ENCODE measurements at regions of chr12 and their contacts with region 1.

Region 1: DNA sequence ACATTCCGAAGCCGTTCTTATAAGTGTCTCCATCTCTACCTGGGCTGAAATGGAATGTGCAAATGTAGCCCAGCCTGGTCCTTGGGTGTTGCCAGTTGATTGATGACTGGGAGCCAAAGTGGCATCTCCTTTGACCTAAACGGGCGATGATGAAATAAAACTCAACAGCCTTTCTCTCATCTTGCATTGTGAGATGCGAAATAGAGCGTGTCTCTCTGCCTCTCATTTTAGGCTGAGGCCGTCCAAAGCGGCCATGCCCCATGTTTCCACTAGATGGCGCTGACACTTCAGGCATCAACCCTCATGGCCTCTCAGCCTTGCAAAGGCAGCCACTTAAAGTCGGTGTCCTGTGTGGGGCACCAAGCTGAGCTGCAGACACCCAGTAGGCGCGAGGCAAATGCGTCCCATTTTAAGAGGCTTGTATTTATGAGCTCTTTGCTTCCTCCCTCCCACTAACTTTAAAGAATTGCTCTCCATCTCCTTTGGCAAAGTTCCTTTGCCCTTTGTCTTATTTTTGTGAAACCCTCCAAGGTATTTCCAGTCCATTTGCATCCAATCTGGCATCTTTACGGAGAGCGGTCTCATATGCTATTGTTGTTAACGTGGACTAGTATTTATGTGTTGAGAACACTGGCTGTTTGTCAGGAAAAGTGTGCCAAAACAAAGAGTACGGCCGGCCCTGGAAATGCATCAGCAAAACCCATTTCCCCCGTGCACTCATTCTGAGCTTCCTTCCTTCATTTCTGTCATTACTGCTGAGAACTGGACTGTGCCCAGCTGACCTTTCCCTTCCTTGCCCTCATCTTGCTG is 25.0 kb downstream of the GPRC5A start:
- DNase-seq: peak; percentile 76 to 82 (median 80)
- H3K4me3 ChIP-seq: no peak overlapping the region
- H3K4me3 Mint-ChIP-seq: peak overlapping the region in 1 of 8 donors; percentile 0
- H3K27ac ChIP-seq: no peak overlapping the region
- H3K27ac Mint-ChIP-seq: peak overlapping the region in 3 of 7 donors; percentile 9 to 36 (median 14)
- H3K4me1 ChIP-seq: peaks cover 5% of the 10 kb centered on the region
- H3K4me1 Mint-ChIP-seq: peaks cover 5 to 8% (median 7%) of the 10 kb centered on the region in 4 donors
- H3K27me3 ChIP-seq: no peaks in the 10 kb centered on the region
- H3K27me3 Mint-ChIP-seq: peaks cover 4 to 9% of the 10 kb centered on the region in 2 donors

Region 2: GRCh38 chr12:12983420-12984035 is 67.2 kb after region 1 on chr12:
- CTCF ChIA-PET with region 1: interaction called, 8 read pairs
- POLR2A ChIA-PET with region 1: no interaction called
- intact Hi-C with region 1: loop called (anchors 1 kb)
- DNase-seq: no peak
- H3K4me3 ChIP-seq: no peak overlapping the region
- H3K4me3 Mint-ChIP-seq: no peak overlapping the region
- H3K27ac ChIP-seq: no peak overlapping the region
- H3K27ac Mint-ChIP-seq: peak overlapping the region in 1 of 7 donors; percentile 52
- H3K4me1 ChIP-seq: no peaks in the 10 kb centered on the region
- H3K4me1 Mint-ChIP-seq: peaks cover 0 to 2% (median under 1%) of the 10 kb centered on the region in 4 donors
- H3K27me3 ChIP-seq: no peaks in the 10 kb centered on the region
- H3K27me3 Mint-ChIP-seq: no peaks in the 10 kb centered on the region

Region 3: DNA sequence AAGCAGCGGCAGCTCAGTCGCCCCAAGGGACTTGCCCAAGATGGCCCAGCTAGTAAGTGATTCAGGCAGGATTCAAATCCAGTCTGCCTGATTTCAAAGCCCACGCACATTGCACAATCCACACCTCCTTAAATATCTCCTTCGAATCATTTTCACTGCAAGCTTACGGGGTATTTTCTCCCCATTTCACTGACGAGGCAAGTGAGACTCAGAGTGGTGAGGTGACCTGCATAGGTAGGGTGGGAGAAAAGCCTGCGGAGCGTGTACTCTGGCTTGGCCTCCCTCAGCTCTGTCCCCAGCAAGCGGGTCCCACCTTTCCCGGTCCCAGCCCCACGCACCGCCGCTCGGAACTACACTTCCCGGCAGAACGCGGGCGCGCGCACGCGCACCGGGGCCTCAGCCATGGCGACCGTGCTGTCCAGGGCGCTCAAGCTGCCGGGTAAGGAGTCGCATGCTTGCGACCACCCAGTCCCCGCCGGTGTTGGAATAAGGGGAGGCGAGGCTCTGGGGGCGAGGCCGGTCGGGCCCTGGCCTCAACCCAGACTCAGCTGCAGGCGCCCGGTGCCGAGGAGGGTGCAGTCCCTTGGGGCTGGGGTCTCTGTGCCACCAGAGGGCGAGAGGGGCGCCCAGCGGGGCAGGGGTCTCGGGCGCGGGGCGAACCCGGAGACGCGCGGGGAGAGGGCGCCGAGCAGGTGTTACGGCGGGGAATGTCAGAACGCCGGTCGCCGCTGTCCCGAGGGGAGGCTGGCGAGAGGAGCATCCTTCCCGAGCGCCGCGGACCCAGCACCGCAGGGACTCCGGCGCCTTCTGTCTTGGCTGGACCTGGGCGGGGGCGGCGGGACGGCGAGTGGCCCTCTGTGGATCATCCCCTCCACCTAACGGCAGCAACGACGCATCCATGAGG is 127.9 kb after region 1 on chr12 and contains the start of gene FAM234B:
- CTCF ChIA-PET with region 1: interaction called, 12 read pairs
- POLR2A ChIA-PET with region 1: no interaction called
- intact Hi-C with region 1: no loop called
- DNase-seq: peak; percentile 57 to 68 (median 59)
- H3K4me3 ChIP-seq: peak within 1 kb of the TSS; percentile 42 to 84
- H3K4me3 Mint-ChIP-seq: peak within 1 kb of the TSS; percentile 82 to 89 (median 87)
- H3K27ac ChIP-seq: peak within 1 kb of the TSS; percentile 43
- H3K27ac Mint-ChIP-seq: peak within 1 kb of the TSS in 6 of 7 donors; percentile 36 to 88 (median 72)
- H3K4me1 ChIP-seq: peaks cover 13% of the 10 kb centered on the region
- H3K4me1 Mint-ChIP-seq: peaks cover 4 to 9% (median 6%) of the 10 kb centered on the region in 4 donors
- H3K27me3 ChIP-seq: no peaks in the 10 kb centered on the region
- H3K27me3 Mint-ChIP-seq: peaks cover 0 to 9% of the 10 kb centered on the region in 2 donors
- total RNA-seq, gene FAM234B: 3.9 to 4.0 TPM

Region 4: DNA sequence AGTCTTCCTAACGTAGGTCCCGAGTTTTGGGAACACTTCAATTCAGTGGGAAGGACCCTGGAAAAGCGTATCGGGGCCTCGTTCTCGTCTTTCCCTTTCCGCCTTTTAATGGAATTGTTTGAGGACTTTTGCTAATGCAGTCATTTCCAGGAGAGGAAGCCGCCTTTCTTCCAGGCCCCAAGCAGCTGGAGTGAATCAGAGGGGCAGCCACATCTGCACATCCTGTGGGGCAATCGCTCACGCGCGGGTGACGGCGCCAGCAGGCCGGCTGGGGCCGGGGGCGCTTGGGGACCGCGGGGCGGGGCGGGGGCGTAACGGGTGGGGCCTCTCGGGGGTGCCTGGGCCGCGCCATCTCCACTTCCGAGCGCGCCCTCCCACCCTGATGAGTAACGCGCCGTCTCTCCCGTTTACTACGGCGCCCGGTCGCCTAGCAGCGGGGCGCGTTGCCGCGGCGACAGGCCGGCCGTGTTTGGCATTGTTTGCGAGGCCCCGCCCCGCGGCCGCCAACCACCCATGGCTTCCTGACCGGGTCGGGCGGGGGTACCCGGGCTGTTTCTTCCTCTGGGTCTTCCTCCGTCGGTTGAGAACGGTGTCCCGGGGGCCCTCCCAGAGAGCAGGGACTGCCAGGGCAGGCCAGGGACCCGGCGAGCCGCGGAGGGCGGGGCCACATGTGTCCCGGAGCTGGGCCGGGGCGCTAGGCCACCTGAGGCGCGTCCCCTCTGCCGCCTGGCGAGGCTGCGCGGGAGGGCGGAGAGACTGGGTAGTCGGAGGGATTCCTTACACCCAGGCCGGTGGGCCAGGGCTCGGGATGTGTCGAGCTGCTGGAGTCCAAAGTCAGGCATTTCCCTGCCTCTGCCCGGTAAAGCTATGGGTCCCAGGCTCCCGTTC is 184.8 kb after region 1 on chr12:
- CTCF ChIA-PET with region 1: interaction called, 22 read pairs
- POLR2A ChIA-PET with region 1: interaction called, 3 read pairs
- intact Hi-C with region 1: loop called (anchors 1 kb)
- DNase-seq: peak; percentile 95 to 97 (median 96)
- H3K4me3 ChIP-seq: peak overlapping the region; percentile 44 to 69
- H3K4me3 Mint-ChIP-seq: peak overlapping the region; percentile 85 to 93 (median 88)
- H3K27ac ChIP-seq: peak overlapping the region; percentile 93
- H3K27ac Mint-ChIP-seq: peak overlapping the region; percentile 93 to 99 (median 99)
- H3K4me1 ChIP-seq: peaks cover 40% of the 10 kb centered on the region
- H3K4me1 Mint-ChIP-seq: peaks cover 38 to 58% (median 45%) of the 10 kb centered on the region in 4 donors
- H3K27me3 ChIP-seq: no peaks in the 10 kb centered on the region
- H3K27me3 Mint-ChIP-seq: no peaks in the 10 kb centered on the region

Region 5: GRCh38 chr12:13255792-13256691 is 339.7 kb after region 1 on chr12:
- CTCF ChIA-PET with region 1: interaction called, 16 read pairs
- POLR2A ChIA-PET with region 1: no interaction called
- intact Hi-C with region 1: no loop called
- DNase-seq: peak; percentile 57 to 71 (median 61)
- H3K4me3 ChIP-seq: no peak overlapping the region
- H3K4me3 Mint-ChIP-seq: peak overlapping the region in 2 of 8 donors; percentile 34 to 49
- H3K27ac ChIP-seq: no peak overlapping the region
- H3K27ac Mint-ChIP-seq: no peak overlapping the region
- H3K4me1 ChIP-seq: no peaks in the 10 kb centered on the region
- H3K4me1 Mint-ChIP-seq: peaks cover 0 to 3% (median 1%) of the 10 kb centered on the region in 4 donors
- H3K27me3 ChIP-seq: no peaks in the 10 kb centered on the region
- H3K27me3 Mint-ChIP-seq: peaks cover 6 to 12% of the 10 kb centered on the region in 2 donors